Body of pancreas (tissue), 4 donors: ENCODE measurements at regions of chr14 and their contacts with region 1.

Region 1: GRCh38 chr14:53539489-53540126 is 386.5 kb upstream of the DDHD1 start:
- DNase-seq: peak; percentile 74 to 77 (median 76)
- ATAC-seq: peak; percentile 77
- H3K4me3 ChIP-seq: no peak overlapping the region
- H3K27ac ChIP-seq: peak overlapping the region in 1 of 4 donors; percentile 7
- H3K4me1 ChIP-seq: no peaks in the 10 kb centered on the region
- H3K27me3 ChIP-seq: no peaks in the 10 kb centered on the region
- CTCF ChIP-seq: peak; percentile 66 to 87 (median 83)
- POLR2A ChIP-seq: no peak

Region 2: DNA sequence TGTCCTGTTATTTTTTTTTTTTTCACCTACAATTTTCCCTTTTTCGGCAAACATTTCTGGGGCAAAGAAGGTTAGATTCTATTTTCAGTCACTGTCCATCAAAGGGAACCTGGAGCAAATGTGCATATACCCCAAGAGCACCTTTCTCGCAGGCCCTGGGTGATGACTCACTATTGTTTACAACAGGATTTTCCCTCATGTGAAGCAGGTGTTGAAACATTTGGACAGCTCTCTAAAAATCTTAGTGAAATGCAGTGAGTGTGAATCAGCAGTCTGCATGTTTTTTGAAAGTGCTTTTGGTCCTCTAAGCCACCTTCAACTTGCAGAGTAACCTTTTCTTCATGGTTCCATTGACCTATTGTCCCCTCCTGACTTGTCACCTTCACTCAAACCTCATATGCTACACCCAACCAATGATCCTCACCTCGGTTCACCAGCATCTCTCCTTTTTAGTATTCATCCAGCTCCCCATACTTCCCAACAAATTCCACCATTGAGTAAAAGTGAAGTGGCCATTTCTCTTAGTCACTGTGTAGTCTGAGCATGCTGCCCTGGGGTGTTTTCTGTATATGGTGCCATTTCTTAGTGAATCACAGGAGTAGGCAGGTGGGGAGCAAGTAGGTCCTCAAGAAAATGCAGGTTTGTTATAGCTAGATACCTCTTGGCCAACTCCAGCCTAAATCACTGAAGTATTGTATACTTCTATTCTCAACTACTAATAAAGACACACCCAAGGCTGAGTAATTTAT is 156.8 kb after region 1 on chr14:
- intact Hi-C with region 1: no loop called
- DNase-seq: no peak
- ATAC-seq: no peak
- H3K4me3 ChIP-seq: no peak overlapping the region
- H3K27ac ChIP-seq: no peak overlapping the region
- H3K4me1 ChIP-seq: no peaks in the 10 kb centered on the region
- H3K27me3 ChIP-seq: no peaks in the 10 kb centered on the region
- CTCF ChIP-seq: no peak
- POLR2A ChIP-seq: no peak

Region 3: GRCh38 chr14:54173802-54174201 is 634.2 kb after region 1 on chr14:
- intact Hi-C with region 1: loop called (anchors 5 kb)
- DNase-seq: no peak
- ATAC-seq: peak; percentile 24
- H3K4me3 ChIP-seq: no peak overlapping the region
- H3K27ac ChIP-seq: no peak overlapping the region
- H3K4me1 ChIP-seq: no peaks in the 10 kb centered on the region
- H3K27me3 ChIP-seq: no peaks in the 10 kb centered on the region
- CTCF ChIP-seq: no peak
- POLR2A ChIP-seq: no peak